Gastrocnemius medialis (tissue), 4 donors: ENCODE measurements at regions of chr1 and their contacts with region 1.

Region 1: DNA sequence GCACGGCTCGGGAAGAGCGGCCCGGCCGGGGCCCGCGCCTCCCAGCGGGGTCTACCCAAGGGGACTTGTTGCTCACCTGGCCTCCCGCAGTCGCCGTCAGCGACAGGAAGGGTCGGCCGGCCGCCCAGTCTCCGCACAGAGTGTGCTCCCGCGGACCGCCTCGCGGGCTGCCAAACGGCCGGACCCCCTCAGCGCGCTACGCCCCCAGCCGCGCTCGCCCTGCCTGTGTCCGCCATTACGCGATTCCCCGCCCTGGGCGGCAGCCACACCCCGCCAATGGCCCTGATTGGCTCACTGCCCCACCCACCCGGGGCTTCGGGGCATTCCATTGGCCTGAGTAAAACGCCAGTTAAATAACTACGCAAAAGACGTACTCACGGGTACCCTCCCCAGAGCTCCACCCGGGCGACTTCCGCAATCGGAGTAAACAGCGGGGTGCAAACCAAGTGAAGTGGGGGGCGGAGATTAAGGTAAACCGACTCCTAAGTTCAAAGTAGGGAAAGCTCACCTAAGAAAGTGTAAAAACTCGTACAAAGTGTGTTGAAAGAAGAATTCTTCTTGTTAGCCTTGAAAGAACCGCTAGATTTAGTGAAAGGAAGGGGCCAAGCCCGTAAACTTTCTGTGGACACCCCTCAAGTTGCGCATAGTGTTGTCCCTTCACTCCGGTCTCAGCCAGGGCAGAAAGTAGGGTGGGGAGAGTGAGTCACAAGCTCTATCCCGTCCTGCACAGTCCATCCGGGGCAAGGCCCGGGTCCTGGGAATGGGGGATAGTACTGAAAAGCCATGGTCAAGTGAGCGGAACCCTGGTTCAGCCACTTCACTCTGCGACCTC is at the start of gene WASF2:
- DNase-seq: peak; percentile 96
- ATAC-seq: peak; percentile 92 to 94
- H3K4me3 ChIP-seq: peak within 1 kb of the TSS; percentile 85 to 100 (median 95)
- H3K27ac ChIP-seq: peak within 1 kb of the TSS; percentile 97 to 100 (median 100)
- H3K4me1 ChIP-seq: peaks cover 30 to 46% of the 10 kb centered on the region in 2 donors
- H3K27me3 ChIP-seq: no peaks in the 10 kb centered on the region
- CTCF ChIP-seq: no peak
- POLR2A ChIP-seq: peak; percentile 90 to 93
- total RNA-seq, gene WASF2: 10.6 to 16.7 (median 13.3) TPM

Region 2: GRCh38 chr1:27402349-27402754 is 87.8 kb before region 1 on chr1:
- in situ Hi-C with region 1: no loop called
- intact Hi-C with region 1: loop called (anchors 5 kb)
- DNase-seq: peak; percentile 57 to 83
- ATAC-seq: peak; percentile 37 to 51
- H3K4me3 ChIP-seq: no peak overlapping the region
- H3K27ac ChIP-seq: peak overlapping the region; percentile 68 to 78 (median 72)
- H3K4me1 ChIP-seq: peaks cover 50 to 57% of the 10 kb centered on the region in 2 donors
- H3K27me3 ChIP-seq: no peaks in the 10 kb centered on the region
- CTCF ChIP-seq: peak; percentile 47 to 74 (median 70)
- POLR2A ChIP-seq: no peak

Region 3: GRCh38 chr1:27416387-27417111 is 73.6 kb before region 1 on chr1:
- in situ Hi-C with region 1: no loop called
- intact Hi-C with region 1: loop called (anchors 2 kb)
- DNase-seq: no peak
- ATAC-seq: peak; percentile 41 to 47
- H3K4me3 ChIP-seq: no peak overlapping the region
- H3K27ac ChIP-seq: peak overlapping the region in 3 of 4 donors; percentile 77 to 86 (median 81)
- H3K4me1 ChIP-seq: peaks cover 33 to 47% of the 10 kb centered on the region in 2 donors
- H3K27me3 ChIP-seq: no peaks in the 10 kb centered on the region
- CTCF ChIP-seq: peak; percentile 38 to 71 (median 70)
- POLR2A ChIP-seq: no peak

Region 4: DNA sequence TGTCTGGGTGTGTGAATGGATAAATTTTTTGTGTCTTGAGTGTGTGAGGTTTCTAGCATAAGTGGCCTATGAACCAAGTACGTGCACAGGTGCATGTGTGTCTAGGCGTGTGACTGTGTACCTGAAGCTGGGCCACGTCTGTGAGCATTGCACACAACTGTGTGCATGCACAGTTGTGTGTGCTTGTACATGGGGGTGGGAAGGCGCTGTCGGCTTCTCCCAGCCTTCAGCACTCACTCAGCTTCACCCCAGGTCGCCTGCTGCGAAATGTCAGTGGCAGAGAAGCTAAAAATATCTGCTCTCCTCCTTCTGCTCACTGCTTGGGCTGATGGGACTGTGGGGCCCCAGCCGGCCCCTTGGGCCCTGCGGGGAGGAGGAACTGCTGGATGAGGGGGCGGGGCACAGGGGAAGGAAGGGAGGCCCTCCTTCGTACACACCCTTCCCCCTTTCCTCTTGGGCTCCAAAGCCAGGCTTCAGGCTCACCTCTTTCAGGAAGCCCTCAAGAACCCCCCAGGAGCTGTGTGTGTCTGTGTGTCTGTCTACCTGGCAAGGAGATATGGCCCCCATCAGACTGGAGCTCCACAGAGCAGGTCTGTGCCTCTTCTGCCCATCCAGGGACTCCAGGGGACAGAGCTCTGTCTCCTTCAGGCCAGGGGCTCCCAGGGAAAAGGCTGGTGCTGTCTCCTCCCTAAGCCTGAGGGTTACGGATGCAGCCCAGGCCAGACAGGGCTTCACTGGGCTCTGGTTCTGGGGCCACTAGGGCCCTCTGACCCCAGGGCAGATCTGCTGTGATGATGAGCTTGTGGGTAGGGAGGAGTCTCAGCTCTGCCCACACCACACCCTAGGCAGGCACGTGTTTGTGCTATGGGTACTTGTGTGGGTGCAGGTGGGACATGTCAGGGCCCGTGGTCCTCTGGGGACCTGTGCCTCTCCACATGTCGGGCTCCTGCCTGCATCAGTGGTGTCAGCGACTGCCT is 35.5 kb after region 1 on chr1:
- in situ Hi-C with region 1: no loop called
- intact Hi-C with region 1: loop called (anchors 5 kb)
- DNase-seq: peak; percentile 47 to 69
- ATAC-seq: peak in 1 of 2 donors; percentile 7
- H3K4me3 ChIP-seq: peak overlapping the region; percentile 4 to 34 (median 24)
- H3K27ac ChIP-seq: peak overlapping the region; percentile 86 to 95 (median 90)
- H3K4me1 ChIP-seq: peaks cover 82 to 89% of the 10 kb centered on the region in 2 donors
- H3K27me3 ChIP-seq: no peaks in the 10 kb centered on the region
- CTCF ChIP-seq: no peak
- POLR2A ChIP-seq: peak in 1 of 2 donors; percentile 9

Region 5: GRCh38 chr1:27568300-27569087 is 78.4 kb after region 1 on chr1:
- in situ Hi-C with region 1: no loop called
- intact Hi-C with region 1: loop called (anchors 1 kb)
- DNase-seq: peak; percentile 95 to 98
- ATAC-seq: peak; percentile 30 to 42
- H3K4me3 ChIP-seq: peak overlapping the region; percentile 30 to 52 (median 38)
- H3K27ac ChIP-seq: peak overlapping the region; percentile 95 to 100 (median 98)
- H3K4me1 ChIP-seq: peaks cover 95 to 96% of the 10 kb centered on the region in 2 donors
- H3K27me3 ChIP-seq: no peaks in the 10 kb centered on the region
- CTCF ChIP-seq: peak; percentile 68 to 92 (median 89)
- POLR2A ChIP-seq: peak; percentile 77 to 82